Aorta (tissue), 5 donors: ENCODE measurements at regions of chr2 and their contacts with region 1.

Region 1: DNA sequence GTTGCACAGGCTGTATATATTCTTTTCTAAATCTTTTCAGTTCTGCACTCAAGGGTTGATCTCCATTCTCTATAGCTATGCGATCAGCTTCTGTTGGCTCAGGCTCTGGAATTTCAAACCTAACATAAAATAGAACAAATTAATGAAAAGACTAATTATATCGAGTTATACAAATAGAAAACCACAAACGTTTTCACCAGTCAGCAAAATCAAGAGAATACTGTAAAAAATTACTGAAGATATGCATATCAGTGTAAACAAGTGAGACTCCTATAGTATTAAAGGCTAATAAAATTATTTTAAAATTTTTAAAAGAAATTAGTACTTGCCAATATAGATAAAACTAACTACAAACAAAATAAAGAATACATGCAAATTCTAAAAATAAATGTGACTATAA is 107.0 kb downstream of the SOS1 start:
- DNase-seq: no peak
- ATAC-seq: no peak
- H3K4me3 ChIP-seq: no peak overlapping the region
- H3K27ac ChIP-seq: no peak overlapping the region
- H3K4me1 ChIP-seq: peaks cover 0 to 2% of the 10 kb centered on the region in 2 donors
- H3K27me3 ChIP-seq: no peaks in the 10 kb centered on the region

Region 2: DNA sequence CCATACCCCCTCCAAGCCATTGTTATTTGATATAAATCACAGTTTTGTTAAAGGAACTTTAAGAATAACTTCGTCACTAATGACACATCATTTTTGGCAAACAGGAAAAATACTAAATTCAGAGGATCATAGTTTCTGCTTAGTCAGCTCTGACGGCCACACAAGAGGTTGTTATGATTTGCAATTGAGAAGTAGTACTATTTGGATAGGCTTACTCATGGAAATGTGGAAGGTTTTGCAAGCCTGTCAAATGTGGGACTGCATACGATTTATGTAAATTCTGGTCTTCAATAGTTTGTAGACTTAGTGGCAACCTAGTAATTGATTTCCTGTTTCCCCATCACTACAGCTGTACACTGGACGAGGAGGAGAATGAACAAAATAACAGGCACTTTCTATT is 16.1 kb before region 1 on chr2:
- intact Hi-C with region 1: loop called in 1 of 2 experiments (anchors 2 kb)
- DNase-seq: no peak
- ATAC-seq: no peak
- H3K4me3 ChIP-seq: no peak overlapping the region
- H3K27ac ChIP-seq: no peak overlapping the region
- H3K4me1 ChIP-seq: no peaks in the 10 kb centered on the region
- H3K27me3 ChIP-seq: no peaks in the 10 kb centered on the region